ENCODE measurements at regions of chr10 and their contacts with region 1.

Region 1: DNA sequence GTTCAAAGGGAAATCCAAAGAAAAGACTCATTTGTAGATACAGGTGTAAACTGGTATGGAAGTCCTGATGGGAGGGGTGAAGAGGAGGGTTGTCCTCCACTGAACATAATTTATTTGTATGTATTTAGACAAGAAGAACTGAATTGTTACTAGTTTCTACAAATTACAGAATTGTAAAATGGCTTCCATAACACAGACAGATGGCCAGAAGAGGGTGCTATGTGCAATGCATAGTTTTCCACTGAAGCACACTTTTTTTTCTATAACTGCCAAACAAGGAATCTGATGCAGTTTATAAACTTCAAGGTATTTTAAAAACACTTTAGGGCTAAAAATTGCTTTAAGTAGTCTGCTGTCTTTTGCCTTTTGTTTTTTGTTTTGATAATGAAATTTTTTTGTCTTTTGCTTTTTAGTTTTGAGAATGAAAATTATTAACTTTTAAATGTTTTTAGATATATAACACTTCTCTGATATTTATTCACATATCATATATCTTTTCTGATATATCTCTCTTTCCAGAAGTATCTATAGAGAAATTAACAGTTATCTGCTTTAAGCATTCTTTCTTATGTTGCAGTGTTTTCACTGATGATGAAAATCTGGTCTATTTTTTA is 58.5 kb downstream of the PHYHIPL start:
- DNase-seq: no peak
- H3K4me3 Mint-ChIP-seq: no peak overlapping the region
- H3K27ac Mint-ChIP-seq: no peak overlapping the region
- H3K4me1 Mint-ChIP-seq: no peaks in the 10 kb centered on the region
- H3K27me3 Mint-ChIP-seq: no peaks in the 10 kb centered on the region

Region 2: GRCh38 chr10:58952747-58953466 is 282.0 kb before region 1 on chr10:
- intact Hi-C with region 1: loop called (anchors 5 kb)
- DNase-seq: no peak
- H3K4me3 Mint-ChIP-seq: no peak overlapping the region
- H3K27ac Mint-ChIP-seq: no peak overlapping the region
- H3K4me1 Mint-ChIP-seq: no peaks in the 10 kb centered on the region
- H3K27me3 Mint-ChIP-seq: no peaks in the 10 kb centered on the region

Region 3: DNA sequence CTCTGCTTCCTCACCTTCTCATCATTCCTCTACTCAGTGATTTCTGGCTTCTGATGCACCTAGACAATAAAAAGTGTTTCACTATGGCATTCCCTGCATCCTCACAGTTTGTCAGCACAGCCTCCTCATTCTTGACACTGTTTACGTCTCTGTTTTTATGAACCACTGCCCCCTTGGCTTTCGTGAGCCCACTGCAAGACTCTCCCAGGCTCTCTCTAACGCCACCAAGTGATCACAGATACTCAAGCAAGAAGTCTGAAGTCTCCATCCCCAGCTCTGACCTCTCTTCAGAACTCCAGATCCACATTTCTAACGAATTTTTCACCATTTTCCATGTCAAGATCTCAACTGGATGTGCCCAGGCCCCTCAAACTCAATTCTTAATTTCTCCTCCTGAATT is 465.8 kb after region 1 on chr10:
- intact Hi-C with region 1: no loop called
- DNase-seq: no peak
- H3K4me3 Mint-ChIP-seq: no peak overlapping the region
- H3K27ac Mint-ChIP-seq: no peak overlapping the region
- H3K4me1 Mint-ChIP-seq: no peaks in the 10 kb centered on the region
- H3K27me3 Mint-ChIP-seq: peaks cover 28% of the 10 kb centered on the region